ENCODE measurements at regions of chr18 and their contacts with region 1.

Region 1: DNA sequence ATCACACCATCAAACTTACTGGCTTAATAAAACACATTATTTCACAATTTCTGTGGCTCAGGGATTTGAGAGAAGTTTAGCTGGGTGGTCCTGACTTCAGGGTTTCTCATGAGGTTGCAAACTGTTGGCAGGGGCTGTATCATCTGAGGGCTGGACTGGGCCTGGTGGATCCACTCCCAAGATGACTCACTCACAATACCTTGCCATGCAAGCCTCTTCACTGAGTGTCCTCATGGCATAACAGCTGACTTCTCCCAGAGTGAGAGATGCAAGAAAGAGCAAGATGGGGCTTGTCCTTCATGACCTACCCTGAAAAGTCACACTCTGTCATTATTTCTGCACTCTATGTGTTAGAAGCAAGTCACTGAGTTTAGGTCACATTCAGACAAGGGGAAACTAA is 73.8 kb downstream of the AQP4 start:
- DNase-seq: peak; percentile 91
- H3K4me3 ChIP-seq: no peak overlapping the region
- H3K27ac ChIP-seq: no peak overlapping the region
- H3K4me1 ChIP-seq: peaks cover 9% of the 10 kb centered on the region
- H3K27me3 ChIP-seq: no peaks in the 10 kb centered on the region
- CTCF ChIP-seq: no peak

Region 2: GRCh38 chr18:26667046-26667445 is 124.6 kb before region 1 on chr18:
- CTCF ChIA-PET with region 1: no interaction called
- dilution Hi-C with region 1: no loop called
- in situ Hi-C with region 1: no loop called
- intact Hi-C with region 1: no loop called
- DNase-seq: no peak
- H3K4me3 ChIP-seq: no peak overlapping the region
- H3K27ac ChIP-seq: no peak overlapping the region
- H3K4me1 ChIP-seq: no peaks in the 10 kb centered on the region
- H3K27me3 ChIP-seq: peaks cover 5% of the 10 kb centered on the region
- CTCF ChIP-seq: no peak

Region 3: DNA sequence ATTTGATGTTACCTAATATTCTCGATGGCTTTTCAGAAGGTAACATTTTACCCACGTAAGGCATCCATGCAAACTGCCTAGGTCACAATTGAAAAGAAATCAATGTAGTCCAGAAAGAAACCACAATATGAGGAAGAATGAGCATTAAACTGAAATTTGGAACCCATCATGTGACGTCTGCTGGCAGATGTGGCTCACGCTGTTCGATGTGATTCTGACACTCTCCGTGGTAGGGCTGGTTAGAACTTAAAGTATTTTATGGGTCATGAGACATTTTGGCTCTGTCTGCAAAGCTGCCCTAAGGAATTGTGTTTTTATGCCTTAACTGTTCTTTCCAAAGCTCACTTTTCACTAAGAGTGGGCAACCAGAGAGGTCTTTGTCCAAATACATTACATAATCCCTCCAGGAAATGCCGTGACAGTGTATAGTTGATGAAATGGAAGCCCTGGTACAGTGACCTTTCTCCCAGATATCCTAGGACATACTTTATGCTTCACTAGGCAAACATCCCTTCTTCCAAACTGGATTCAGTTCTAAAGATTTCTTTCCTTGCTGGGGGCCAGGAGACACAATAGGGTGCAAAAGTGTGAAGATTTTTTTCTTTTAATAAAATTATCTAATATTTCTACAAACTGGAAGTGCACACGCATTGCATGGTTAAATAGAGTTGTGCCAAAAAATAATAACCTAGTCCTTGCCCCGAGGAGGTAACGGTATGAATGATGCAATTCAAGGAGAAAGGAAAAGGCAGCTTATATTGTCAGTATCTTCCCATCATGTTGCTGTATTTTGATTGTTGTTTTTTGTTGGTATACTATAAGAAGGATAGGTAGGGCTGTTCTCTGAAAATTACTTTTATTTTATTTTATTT is 45.2 kb before region 1 on chr18:
- CTCF ChIA-PET with region 1: no interaction called
- dilution Hi-C with region 1: no loop called
- in situ Hi-C with region 1: no loop called
- intact Hi-C with region 1: loop called (anchors 2 kb)
- DNase-seq: no peak
- H3K4me3 ChIP-seq: peak overlapping the region in 1 of 3 experiments; percentile 16
- H3K27ac ChIP-seq: no peak overlapping the region
- H3K4me1 ChIP-seq: peaks cover 13% of the 10 kb centered on the region
- H3K27me3 ChIP-seq: no peaks in the 10 kb centered on the region
- CTCF ChIP-seq: no peak

Region 4: DNA sequence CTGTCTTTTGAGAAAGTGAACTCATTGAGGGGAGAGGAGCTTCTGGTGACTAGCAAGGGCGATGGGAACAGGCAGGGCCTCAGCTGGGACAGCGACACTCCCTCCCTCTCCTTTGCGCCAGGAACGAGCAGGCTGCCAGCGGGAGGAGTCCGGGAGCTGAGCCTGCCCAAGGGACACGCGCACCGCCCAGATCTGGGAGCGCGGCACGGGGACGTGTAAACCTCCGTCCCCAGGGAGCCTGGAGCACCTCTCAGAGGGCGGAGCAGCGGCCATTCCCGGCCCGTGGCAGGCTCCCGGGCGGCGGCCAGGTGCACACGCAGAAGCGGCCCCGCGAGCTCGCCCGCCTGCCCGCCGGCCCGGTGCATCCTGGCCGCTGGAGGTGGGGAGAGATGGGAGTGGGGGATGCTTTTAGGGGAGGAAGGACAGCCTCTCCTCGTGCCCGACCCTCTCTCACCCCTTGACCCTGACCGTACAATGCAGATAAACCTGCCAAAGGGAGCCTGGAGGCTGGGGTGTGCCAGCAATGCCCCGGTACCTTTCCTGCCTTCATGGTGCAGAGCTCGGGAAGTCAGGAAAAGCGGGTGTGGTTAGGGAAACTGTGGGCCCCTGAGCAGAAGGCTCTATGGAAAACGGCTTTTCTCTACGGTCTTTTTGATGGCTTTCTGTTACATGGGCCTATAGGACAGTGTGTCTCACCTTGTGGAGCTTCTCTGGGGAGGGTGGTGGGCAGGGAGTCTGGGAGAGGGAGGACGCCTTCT is 71.6 kb after region 1 on chr18:
- CTCF ChIA-PET with region 1: no interaction called
- dilution Hi-C with region 1: no loop called
- in situ Hi-C with region 1: no loop called
- intact Hi-C with region 1: no loop called
- DNase-seq: peak; percentile 34
- H3K4me3 ChIP-seq: peak overlapping the region in 2 of 3 experiments; percentile 36
- H3K27ac ChIP-seq: no peak overlapping the region
- H3K4me1 ChIP-seq: peaks cover 3% of the 10 kb centered on the region
- H3K27me3 ChIP-seq: peaks cover 11% of the 10 kb centered on the region
- CTCF ChIP-seq: no peak